ENCODE measurements at regions of chr14 and their contacts with region 1.

Region 1: GRCh38 chr14:64540208-64541157 is at the start of gene HSPA2:
- DNase-seq: peak; percentile 100
- ATAC-seq: peak; percentile 88
- H3K4me3 ChIP-seq: peak within 1 kb of the TSS; percentile 68
- H3K27ac ChIP-seq: peak within 1 kb of the TSS; percentile 73
- H3K4me1 ChIP-seq: peaks cover 27% of the 10 kb centered on the region
- H3K27me3 ChIP-seq: no peaks in the 10 kb centered on the region
- CTCF ChIP-seq: peak; percentile 80
- total RNA-seq, gene HSPA2: 15.7 and 16.5 TPM in 2 replicates

Region 2: GRCh38 chr14:64478634-64479250 is 61.7 kb before region 1 on chr14:
- CTCF ChIA-PET with region 1: no interaction called
- POLR2A ChIA-PET with region 1: no interaction called
- intact Hi-C with region 1: no loop called
- DNase-seq: peak; percentile 64
- ATAC-seq: peak; percentile 60
- H3K4me3 ChIP-seq: no peak overlapping the region
- H3K27ac ChIP-seq: no peak overlapping the region
- H3K4me1 ChIP-seq: no peaks in the 10 kb centered on the region
- H3K27me3 ChIP-seq: no peaks in the 10 kb centered on the region
- CTCF ChIP-seq: peak; percentile 73

Region 3: DNA sequence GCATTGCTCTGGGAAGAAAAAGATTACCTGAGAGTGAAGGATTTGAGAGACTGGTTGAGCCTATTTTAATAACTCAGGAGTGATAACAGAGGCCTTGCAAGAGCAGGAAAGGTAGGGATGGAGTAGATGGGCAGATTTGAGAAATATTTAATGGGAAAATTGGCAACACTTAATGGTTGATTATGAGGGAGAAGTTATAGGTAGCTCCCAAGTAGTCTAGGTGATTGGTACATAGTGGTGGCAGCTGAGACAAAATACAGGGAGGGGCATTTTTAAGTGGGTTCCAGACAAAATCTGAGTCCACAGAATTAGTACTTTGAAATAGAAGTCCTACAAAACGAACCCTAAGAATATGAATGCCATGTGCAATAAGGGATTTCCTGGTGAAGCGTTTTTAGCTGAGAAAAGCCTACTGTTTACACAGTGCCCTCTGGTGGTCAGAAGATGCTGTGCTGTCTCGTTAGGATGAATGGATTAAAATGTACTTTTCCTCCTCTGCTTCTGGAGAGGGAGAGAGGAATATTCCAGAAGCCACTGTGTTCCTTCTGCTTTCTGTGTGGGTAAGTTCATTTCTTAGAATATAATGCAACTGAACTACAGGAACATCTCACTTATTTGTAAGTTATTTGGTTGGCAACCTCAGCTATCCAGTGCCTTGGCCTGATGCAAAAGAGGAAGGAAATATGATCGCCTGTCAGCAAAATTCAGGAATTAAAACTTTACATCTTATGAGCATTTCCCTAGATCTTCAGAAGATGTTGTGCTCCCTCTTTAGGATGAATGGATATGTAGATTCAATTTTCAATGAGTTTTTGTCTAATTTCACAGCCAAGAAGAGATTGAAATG is 29.4 kb before region 1 on chr14:
- CTCF ChIA-PET with region 1: interaction called, 10 read pairs
- POLR2A ChIA-PET with region 1: no interaction called
- intact Hi-C with region 1: no loop called
- DNase-seq: peak; percentile 88
- ATAC-seq: peak; percentile 37
- H3K4me3 ChIP-seq: no peak overlapping the region
- H3K27ac ChIP-seq: 0 out of 2 replicates have a peak overlapping the region, but pooled peaks have one; percentile 12
- H3K4me1 ChIP-seq: peaks cover 54% of the 10 kb centered on the region
- H3K27me3 ChIP-seq: no peaks in the 10 kb centered on the region
- CTCF ChIP-seq: peak; percentile 98

Region 4: DNA sequence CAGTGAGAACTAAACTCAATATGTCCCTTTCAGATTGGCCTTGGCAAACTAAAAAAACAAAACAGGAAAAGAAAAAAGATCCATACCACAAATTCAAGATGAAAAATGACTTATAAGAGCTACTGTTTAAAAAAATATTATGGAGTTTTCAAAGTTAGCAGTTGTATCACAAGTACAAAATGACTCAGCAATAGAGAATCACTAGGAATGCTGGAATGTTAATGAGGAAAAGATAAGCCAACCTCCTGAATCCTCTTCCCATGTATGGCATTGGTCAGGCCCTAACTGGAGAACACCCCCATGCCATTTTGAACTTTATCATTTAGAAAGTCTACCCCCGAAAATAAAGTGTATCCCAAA is 71.5 kb after region 1 on chr14:
- CTCF ChIA-PET with region 1: interaction called, 3 read pairs
- POLR2A ChIA-PET with region 1: no interaction called
- intact Hi-C with region 1: loop called (anchors 1 kb)
- DNase-seq: peak; percentile 53
- ATAC-seq: peak; percentile 57
- H3K4me3 ChIP-seq: no peak overlapping the region
- H3K27ac ChIP-seq: peak overlapping the region; percentile 43
- H3K4me1 ChIP-seq: peaks cover 30% of the 10 kb centered on the region
- H3K27me3 ChIP-seq: no peaks in the 10 kb centered on the region
- CTCF ChIP-seq: no peak

Region 5: GRCh38 chr14:64636208-64636979 is 95.9 kb after region 1 on chr14:
- CTCF ChIA-PET with region 1: interaction called, 19 read pairs
- POLR2A ChIA-PET with region 1: interaction called, 10 read pairs
- intact Hi-C with region 1: loop called (anchors 1 kb)
- DNase-seq: peak; percentile 87
- ATAC-seq: peak; percentile 93
- H3K4me3 ChIP-seq: no peak overlapping the region
- H3K27ac ChIP-seq: no peak overlapping the region
- H3K4me1 ChIP-seq: peaks cover 11% of the 10 kb centered on the region; the same call in 1 of the 2 replicates
- H3K27me3 ChIP-seq: no peaks in the 10 kb centered on the region
- CTCF ChIP-seq: peak; percentile 93

Region 6: GRCh38 chr14:64764641-64765520 is 224.4 kb after region 1 on chr14:
- CTCF ChIA-PET with region 1: interaction called, 6 read pairs
- POLR2A ChIA-PET with region 1: interaction called, 4 read pairs
- intact Hi-C with region 1: loop called (anchors 1 kb)
- DNase-seq: peak; percentile 92
- ATAC-seq: peak; percentile 48
- H3K4me3 ChIP-seq: peak overlapping the region; percentile 31; the same call in 1 of the 2 replicates
- H3K27ac ChIP-seq: no peak overlapping the region
- H3K4me1 ChIP-seq: peaks cover 49% of the 10 kb centered on the region
- H3K27me3 ChIP-seq: no peaks in the 10 kb centered on the region
- CTCF ChIP-seq: peak; percentile 86

Region 7: DNA sequence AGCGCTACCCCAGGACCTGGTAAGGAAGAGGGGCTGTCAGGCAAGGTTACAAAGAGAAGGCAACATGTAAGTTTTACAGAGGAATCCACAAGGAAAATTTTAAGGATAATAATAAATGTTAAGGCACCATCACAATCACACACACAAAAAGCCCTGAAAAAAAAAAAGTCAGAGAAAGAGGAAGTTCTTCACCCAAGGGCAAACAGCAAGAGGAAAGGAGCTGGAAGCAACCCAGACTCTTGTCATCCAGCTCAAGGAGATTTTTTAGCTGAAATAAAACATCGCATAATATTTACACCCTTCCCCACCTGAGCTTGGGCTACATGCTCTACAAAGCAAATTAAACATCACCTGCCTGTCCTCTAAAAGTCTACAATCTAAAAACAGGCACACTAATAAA is 329.7 kb after region 1 on chr14:
- CTCF ChIA-PET with region 1: no interaction called
- POLR2A ChIA-PET with region 1: no interaction called
- intact Hi-C with region 1: no loop called
- DNase-seq: no peak
- ATAC-seq: no peak
- H3K4me3 ChIP-seq: no peak overlapping the region
- H3K27ac ChIP-seq: no peak overlapping the region
- H3K4me1 ChIP-seq: no peaks in the 10 kb centered on the region
- H3K27me3 ChIP-seq: peaks cover 86% of the 10 kb centered on the region
- CTCF ChIP-seq: no peak

Measured in PC-3 (cell line).